ENCODE measurements at regions of chr19 and their contacts with region 1.

Region 1: GRCh38 chr19:10870955-10871603 is at the start of gene CARM1:
- DNase-seq: peak; percentile 99
- H3K4me3 ChIP-seq: peak within 1 kb of the TSS; percentile 81 to 100 (median 99)
- H3K27ac ChIP-seq: peak within 1 kb of the TSS; percentile 52
- H3K4me1 ChIP-seq: peaks cover 12% of the 10 kb centered on the region
- H3K27me3 ChIP-seq: no peaks in the 10 kb centered on the region
- CTCF ChIP-seq: peak; percentile 65 to 66
- POLR2A ChIP-seq: no peak
- total RNA-seq, gene CARM1: 70.8 and 72.2 TPM in 2 replicates

Region 2: GRCh38 chr19:10653715-10654492 is 217.2 kb before region 1 on chr19 and contains the start of gene ILF3:
- CTCF ChIA-PET with region 1: no interaction called
- POLR2A ChIA-PET with region 1: no interaction called
- dilution Hi-C with region 1: no loop called
- intact Hi-C with region 1: no loop called
- DNase-seq: peak; percentile 100
- H3K4me3 ChIP-seq: peak within 1 kb of the TSS; percentile 94 to 99 (median 94)
- H3K27ac ChIP-seq: peak within 1 kb of the TSS; percentile 78
- H3K4me1 ChIP-seq: peaks cover 10% of the 10 kb centered on the region
- H3K27me3 ChIP-seq: no peaks in the 10 kb centered on the region
- CTCF ChIP-seq: no peak
- POLR2A ChIP-seq: peak; percentile 92
- total RNA-seq, gene ILF3: 425 and 459 TPM in 2 replicates

Region 3: GRCh38 chr19:10884274-10884673 is 13.2 kb after region 1 on chr19:
- CTCF ChIA-PET with region 1: interaction called, 21 read pairs
- POLR2A ChIA-PET with region 1: no interaction called
- dilution Hi-C with region 1: no loop called
- intact Hi-C with region 1: no loop called
- DNase-seq: no peak
- H3K4me3 ChIP-seq: no peak overlapping the region
- H3K27ac ChIP-seq: no peak overlapping the region
- H3K4me1 ChIP-seq: no peaks in the 10 kb centered on the region
- H3K27me3 ChIP-seq: no peaks in the 10 kb centered on the region
- CTCF ChIP-seq: no peak
- POLR2A ChIP-seq: no peak

Region 4: DNA sequence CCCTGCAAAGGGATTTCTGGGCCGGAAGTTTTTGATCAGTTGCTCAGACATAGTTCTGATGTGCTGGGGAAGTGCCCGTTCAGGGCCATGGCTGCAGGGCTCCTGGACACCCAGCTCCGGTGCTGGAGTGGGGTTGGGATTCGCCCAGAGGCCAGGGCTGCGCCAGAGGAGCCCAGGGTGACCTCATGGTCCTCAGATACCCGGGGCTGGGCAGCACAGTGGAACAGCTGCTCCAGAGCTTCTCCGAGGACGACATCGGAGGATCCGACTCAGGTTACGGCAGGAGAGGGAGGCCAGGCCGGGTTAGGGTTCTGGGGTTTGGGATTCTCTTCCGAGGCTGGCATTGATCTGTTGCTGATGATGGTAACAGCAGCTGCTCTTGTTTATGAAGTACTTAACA is 21.2 kb after region 1 on chr19:
- CTCF ChIA-PET with region 1: interaction called, 13 read pairs
- POLR2A ChIA-PET with region 1: no interaction called
- dilution Hi-C with region 1: no loop called
- intact Hi-C with region 1: no loop called
- DNase-seq: no peak
- H3K4me3 ChIP-seq: no peak overlapping the region
- H3K27ac ChIP-seq: no peak overlapping the region
- H3K4me1 ChIP-seq: no peaks in the 10 kb centered on the region
- H3K27me3 ChIP-seq: no peaks in the 10 kb centered on the region
- CTCF ChIP-seq: no peak
- POLR2A ChIP-seq: no peak

Region 5: DNA sequence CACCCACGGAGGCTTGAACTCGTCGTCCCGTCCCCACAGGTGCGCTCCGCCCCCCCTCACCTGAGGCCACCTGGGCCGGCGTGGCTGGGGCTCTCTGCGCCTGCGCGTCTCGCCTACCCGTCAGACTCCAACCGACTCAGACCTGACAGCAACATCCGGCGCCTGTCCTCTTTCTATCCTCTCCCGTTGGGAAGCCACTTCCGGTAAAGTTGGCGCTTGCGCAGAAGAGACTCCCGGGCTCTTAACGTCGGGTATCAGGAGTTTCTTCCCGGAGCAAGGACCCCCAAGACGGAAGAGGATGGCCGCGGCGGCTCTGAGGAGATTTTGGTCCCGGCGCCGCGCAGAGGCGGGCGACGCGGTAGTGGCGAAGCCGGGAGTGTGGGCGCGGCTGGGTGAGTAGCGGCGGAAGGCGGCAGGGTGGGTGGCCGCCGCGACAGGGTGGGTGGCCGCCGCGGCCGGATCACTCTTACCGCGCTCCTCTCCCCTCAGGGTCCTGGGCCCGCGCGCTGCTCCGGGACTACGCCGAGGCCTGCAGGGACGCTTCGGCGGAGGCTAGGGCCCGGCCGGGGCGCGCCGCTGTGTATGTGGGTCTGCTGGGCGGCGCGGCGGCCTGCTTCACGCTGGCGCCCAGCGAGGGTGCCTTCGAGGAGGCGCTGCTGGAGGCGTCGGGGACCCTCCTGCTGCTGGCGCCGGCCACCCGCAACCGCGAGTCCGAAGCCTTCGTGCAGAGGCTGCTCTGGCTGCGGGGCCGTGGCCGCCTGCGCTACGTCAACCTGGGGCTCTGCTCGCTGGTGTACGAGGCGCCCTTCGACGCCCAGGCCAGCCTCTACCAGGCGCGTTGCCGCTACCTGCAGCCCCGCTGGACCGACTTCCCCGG is 57.7 kb after region 1 on chr19 and contains the starts of genes TIMM29 and YIPF2:
- CTCF ChIA-PET with region 1: interaction called, 6 read pairs
- POLR2A ChIA-PET with region 1: no interaction called
- dilution Hi-C with region 1: no loop called
- intact Hi-C with region 1: loop called (anchors 5 kb)
- DNase-seq: peak; percentile 96
- H3K4me3 ChIP-seq: peak within 1 kb of the TSS; percentile 69 to 96 (median 73)
- H3K27ac ChIP-seq: no peak within 1 kb of the TSS
- H3K4me1 ChIP-seq: peaks cover 9% of the 10 kb centered on the region
- H3K27me3 ChIP-seq: no peaks in the 10 kb centered on the region
- CTCF ChIP-seq: no peak
- POLR2A ChIP-seq: peak; percentile 77
- total RNA-seq, gene TIMM29: 16.4 and 20.6 TPM in 2 replicates
- total RNA-seq, gene YIPF2: 45.3 and 47.8 TPM in 2 replicates

Region 6: GRCh38 chr19:11050323-11051114 is 179.4 kb after region 1 on chr19:
- CTCF ChIA-PET with region 1: no interaction called
- POLR2A ChIA-PET with region 1: no interaction called
- dilution Hi-C with region 1: no loop called
- intact Hi-C with region 1: no loop called
- DNase-seq: no peak
- H3K4me3 ChIP-seq: no peak overlapping the region
- H3K27ac ChIP-seq: no peak overlapping the region
- H3K4me1 ChIP-seq: no peaks in the 10 kb centered on the region
- H3K27me3 ChIP-seq: no peaks in the 10 kb centered on the region
- CTCF ChIP-seq: no peak
- POLR2A ChIP-seq: no peak